ENCODE measurements at regions of chr18 and their contacts with region 1.

Region 1: DNA sequence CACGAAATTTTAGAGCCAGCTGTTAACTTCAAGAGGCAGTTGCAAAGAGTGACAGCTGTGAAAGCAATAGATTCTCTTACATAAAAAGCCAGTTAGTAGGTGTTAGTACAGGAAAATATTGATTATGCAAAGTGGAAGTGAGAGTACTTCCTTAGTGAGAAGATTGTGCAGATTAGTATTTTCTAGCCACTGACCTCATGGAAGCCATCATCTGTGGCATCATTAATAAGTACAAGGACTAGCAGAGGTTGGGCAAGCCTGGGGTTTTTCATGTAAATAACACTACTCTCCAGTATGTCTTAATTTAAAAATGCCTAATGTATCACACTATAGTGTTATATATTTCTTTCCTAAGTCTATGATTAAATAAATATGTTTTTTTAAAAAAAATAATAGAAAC is 166.2 kb upstream of the DTNA start:
- DNase-seq: no peak
- H3K4me3 ChIP-seq: no peak overlapping the region
- H3K27ac ChIP-seq: no peak overlapping the region
- H3K4me1 ChIP-seq: no peaks in the 10 kb centered on the region
- H3K27me3 ChIP-seq: no peaks in the 10 kb centered on the region
- CTCF ChIP-seq: no peak

Region 2: DNA sequence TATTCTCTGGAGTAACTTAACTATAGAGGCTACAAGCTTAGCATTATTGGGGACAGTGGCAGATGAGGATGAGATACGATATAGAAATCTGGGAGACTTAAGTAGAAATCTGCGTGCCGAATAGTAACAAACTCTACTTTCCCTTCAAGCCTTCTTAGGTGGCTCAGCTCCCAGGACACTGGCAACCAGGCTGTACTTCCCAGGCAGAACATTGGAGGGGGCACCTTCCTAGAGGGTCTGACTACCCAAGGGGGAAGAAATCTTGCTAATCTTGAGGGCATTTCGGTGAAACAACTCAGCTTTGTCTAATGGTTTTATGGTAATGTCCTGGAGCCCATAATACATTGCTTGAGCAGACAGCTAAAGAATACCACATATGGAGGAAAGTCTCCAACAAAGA is 40.0 kb after region 1 on chr18:
- intact Hi-C with region 1: loop called (anchors 2 kb)
- DNase-seq: no peak
- H3K4me3 ChIP-seq: no peak overlapping the region
- H3K27ac ChIP-seq: no peak overlapping the region
- H3K4me1 ChIP-seq: no peaks in the 10 kb centered on the region
- H3K27me3 ChIP-seq: no peaks in the 10 kb centered on the region
- CTCF ChIP-seq: no peak

Measured in tibial artery (tissue), 4 donors.